Activated CD4-positive, alpha-beta memory T cell treated with anti-CD3 and anti-CD28 coated beads, Interleukin-2, amount 10 ng/mL, durations not matched to agents 7 days and 5 days (primary cell): ENCODE measurements at regions of chr15 and their contacts with region 1.

Region 1: DNA sequence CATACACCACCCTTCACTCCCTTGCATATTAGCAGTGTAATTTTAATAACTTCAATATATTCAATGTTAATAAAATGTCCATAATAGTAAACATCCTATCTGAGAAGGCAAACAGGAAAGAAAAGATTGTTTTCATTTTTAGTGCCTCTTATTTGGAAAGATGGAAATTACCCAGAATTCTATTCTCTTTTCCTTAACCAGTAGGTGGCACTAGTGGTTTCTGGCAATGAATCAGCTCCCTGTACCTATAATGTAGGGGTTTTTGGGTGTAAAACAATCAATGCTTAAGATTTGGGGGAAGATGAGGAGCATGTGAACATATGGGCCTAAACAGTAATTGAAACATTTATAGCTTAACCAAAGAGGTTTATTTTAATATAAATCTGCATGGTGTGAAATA is 5.7 kb upstream of the SEMA6D start:
- DNase-seq: no peak
- H3K4me3 Mint-ChIP-seq: no peak overlapping the region
- H3K27ac Mint-ChIP-seq: no peak overlapping the region
- H3K4me1 Mint-ChIP-seq: no peaks in the 10 kb centered on the region
- H3K27me3 Mint-ChIP-seq: peaks cover 19% of the 10 kb centered on the region

Region 2: DNA sequence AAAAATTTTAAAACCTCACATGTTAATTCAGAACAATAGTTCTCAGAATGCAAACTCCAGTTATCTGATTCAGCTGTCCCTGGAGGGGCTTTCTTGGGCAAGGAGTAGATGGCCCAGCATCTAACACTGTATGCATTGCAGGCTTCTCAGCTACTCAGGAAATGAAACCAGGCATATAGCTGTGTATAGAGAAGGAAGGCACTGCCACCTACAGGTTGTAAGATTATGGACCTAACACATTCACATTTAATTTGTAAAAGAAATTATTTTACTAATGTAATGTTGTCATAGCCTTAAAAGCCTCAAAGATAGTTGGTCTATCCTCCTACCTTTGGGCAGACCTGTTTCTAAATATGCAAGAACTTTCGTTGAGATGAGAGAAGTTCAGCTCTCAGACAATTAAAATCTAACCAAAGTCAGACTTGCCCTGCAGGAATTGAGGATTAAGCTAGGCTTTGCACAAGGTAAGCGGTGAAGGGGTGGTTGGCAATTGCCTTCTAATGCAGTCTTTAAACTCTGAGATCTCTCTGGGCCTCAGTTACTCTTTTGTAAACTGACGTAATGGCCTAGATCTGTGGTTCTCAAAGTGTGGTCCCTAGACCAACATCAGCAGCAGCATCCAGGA is 276.4 kb after region 1 on chr15:
- CTCF ChIA-PET with region 1: interaction called, 13 read pairs
- POLR2A ChIA-PET with region 1: no interaction called
- DNase-seq: peak; percentile 19
- H3K4me3 Mint-ChIP-seq: no peak overlapping the region
- H3K27ac Mint-ChIP-seq: no peak overlapping the region
- H3K4me1 Mint-ChIP-seq: no peaks in the 10 kb centered on the region
- H3K27me3 Mint-ChIP-seq: peaks cover 10% of the 10 kb centered on the region